ENCODE measurements at regions of chr13 and their contacts with region 1.

Region 1: DNA sequence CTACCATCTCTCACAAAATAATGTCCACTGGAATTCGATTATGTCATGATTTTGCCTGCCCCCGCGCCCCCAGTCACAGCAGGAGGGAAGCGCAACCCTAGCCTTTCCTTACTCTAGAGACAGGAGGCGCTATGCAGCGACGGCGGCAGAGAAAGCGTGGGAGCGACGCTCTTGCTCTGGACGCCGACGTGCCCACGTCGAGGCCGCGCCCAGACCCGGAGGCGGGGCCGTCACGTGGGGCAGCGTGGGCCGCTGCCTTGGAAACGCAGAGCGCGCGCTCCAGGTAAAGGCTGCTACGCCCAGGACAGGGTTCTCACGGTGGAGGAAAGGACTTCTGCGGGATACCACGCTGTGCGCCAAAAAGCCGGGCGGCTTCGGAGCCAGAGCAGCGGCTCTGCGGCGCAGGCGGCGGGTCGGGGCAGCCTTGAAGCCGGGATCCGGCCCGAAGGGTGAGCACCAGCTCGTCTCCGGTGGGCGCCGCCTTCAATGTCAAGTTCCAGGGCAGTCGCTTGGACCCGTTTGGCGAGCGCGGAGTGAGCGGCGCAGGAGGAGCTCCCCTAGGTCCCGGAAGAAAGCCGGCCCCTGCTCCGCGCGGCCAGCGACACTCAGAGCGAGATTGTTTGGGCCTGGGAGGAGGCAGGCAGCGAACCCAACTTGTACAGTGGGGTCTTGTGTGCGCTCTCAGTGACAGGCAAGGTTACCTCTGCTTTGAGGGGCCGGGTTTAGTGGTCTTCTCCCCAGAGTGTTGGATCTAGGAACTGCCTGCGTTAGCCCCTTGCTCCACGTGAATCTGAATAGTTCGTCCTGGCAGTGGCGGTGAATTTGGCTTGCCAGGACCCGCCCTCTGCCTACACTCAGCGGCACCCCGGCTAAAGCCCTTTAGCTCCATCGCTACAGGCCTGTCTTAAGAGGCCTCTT is 121.7 kb downstream of the MRPL57 start:
- DNase-seq: peak; percentile 95
- CTCF ChIP-seq: peak; percentile 94

Region 2: GRCh38 chr13:21232196-21232595 is 66.0 kb before region 1 on chr13:
- CTCF ChIA-PET with region 1: no interaction called
- POLR2A ChIA-PET with region 1: no interaction called
- DNase-seq: no peak
- CTCF ChIP-seq: no peak

Region 3: DNA sequence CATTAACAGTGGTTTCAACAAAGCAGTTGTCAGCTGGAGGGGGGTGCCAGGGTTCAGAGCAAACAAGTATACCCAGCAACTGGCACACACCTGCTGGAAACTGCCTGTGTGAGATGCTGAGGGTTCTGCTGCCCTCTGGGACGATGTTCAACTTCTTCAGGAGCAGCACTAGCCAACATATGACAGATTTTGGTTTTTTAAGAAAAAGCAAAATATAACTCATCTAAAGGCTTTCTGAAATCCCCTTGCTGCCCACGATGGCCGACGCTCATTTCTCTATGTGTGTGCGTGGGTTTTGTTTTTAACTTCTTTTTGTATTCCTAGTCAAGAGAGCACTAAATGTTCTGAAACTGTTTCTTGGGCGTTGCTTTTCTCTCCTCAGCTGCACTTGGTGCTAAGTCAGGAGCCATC is 41.8 kb before region 1 on chr13:
- CTCF ChIA-PET with region 1: no interaction called
- POLR2A ChIA-PET with region 1: no interaction called
- DNase-seq: no peak
- CTCF ChIP-seq: no peak

Region 4: GRCh38 chr13:21282065-21282464 is 16.1 kb before region 1 on chr13:
- CTCF ChIA-PET with region 1: interaction called, 13 read pairs
- POLR2A ChIA-PET with region 1: no interaction called
- DNase-seq: no peak
- CTCF ChIP-seq: no peak

Region 5: GRCh38 chr13:21310221-21310620 is 12.0 kb after region 1 on chr13:
- CTCF ChIA-PET with region 1: interaction called, 30 read pairs
- POLR2A ChIA-PET with region 1: no interaction called
- DNase-seq: no peak
- CTCF ChIP-seq: no peak

Region 6: DNA sequence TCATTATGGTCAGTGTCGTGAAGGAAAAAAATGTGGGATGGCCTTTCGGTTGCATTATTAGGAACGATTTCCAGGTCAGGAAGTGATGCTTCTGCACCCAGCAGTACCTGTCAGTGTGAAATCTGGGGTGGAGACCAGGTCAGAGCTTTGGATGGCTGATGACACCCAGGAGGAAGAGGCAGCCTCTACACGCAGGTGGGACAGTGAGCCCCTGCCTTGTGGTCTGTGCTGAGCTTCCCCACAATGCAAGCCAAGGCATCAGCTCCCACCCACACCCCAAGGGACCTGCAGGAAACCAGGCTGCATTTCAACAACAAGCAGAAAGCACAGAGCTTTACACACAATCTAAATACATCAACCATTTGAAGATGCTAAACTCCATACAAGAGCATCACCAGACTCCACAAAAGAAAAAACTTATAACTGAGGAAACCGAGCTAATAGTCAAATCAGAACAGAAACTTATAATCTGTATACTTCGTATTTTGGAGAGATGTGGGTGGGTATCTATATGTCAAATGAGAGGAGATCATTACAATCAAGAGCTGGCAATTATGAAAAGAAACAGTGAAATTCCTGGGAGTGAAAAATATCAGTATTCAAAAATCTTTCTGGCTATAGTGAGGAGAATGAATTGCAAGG is 30.8 kb after region 1 on chr13:
- CTCF ChIA-PET with region 1: interaction called, 12 read pairs
- POLR2A ChIA-PET with region 1: no interaction called
- DNase-seq: no peak
- CTCF ChIP-seq: no peak

Region 7: DNA sequence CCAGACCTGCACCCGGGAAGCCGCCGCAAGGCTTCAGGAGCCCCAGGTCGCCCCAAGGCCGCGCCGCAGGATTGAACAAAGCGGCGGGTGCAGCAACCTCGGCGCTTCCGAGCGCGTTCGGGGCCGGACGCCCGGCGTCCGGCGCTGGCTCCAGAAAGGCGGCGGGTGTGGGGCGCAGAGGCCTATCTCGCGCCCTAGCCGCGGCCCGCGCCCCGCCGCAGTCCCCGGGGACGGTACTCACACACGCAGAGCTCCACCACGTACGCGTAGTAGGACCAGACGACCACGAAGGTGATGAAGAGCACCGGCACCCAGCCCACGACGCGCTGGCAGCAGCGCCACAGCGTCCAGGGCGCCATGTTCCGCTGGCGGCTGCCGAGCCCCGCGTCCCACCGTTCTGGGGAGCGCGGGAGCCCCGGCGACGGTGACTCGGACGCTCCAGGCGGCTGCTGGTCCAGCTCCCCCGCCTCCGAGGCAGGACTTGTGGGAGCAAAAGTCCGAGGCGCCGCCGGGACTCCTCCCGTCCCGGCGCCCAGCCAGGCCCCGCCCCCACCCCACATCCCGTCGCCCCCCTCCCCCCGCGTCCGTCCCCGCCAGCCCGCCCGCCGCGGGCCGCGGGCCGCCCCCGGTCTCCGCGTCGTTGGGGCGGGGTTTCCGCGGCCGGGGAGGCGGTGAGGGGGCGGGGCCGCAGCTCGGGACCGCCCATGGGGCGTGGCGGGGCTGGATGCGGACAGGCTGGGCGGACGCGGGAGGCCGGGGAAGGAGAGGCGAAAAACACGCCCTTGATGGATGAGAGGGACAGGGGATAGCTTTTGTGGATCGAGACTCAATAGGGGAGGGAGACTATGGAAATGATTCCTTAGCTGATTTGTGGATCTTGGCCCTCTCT is 160.9 kb after region 1 on chr13 and contains the start of gene ZDHHC20:
- CTCF ChIA-PET with region 1: interaction called, 22 read pairs
- POLR2A ChIA-PET with region 1: no interaction called
- DNase-seq: peak; percentile 98
- CTCF ChIP-seq: no peak

Region 8: DNA sequence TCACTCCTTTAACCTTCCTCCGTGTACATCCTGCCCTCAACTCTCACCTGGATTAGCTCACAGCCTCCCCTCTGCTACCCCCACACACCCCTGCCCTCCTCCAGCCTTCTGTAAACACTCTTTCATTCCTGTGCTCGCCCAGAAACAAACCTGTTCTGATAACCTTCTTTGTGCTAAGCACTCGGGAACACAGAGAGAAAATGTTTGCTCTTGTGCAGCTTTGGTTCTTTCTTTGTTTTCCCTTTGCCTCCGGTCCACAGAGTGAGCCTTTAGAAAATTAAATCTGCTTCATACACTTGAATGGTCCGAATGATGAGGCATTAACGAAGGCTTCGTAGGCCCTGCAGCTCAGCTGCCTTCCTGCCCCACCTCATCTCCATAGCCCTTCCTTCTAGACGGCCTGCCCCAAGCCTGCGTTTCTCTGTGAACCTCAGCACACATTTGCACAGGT is 167.6 kb after region 1 on chr13:
- CTCF ChIA-PET with region 1: interaction called, 22 read pairs
- POLR2A ChIA-PET with region 1: no interaction called
- DNase-seq: no peak
- CTCF ChIP-seq: no peak